Posterior vena cava (tissue), 2 donors: ENCODE measurements at regions of chr7 and their contacts with region 1.

Region 1: DNA sequence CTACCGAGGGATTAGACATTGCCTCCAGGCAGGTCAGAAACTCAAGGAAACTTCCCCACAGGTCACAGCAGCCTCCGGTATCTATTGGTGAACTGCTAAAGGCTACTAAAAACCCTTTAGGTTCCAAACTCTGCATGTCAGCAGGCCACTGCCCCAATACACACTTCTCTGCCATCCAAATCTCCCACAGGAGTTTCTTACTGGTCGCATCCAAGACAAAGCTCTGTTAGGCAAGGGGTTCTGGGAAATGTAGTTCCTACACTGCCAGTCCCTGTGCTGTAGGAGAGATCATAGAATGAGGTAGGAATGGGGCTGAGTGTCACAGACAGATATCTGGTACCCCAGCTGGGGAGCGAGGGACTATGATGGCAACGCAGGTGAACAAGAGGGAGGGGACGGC is 757.0 kb upstream of the C7orf33 start:
- DNase-seq: no peak

Region 2: GRCh38 chr7:147308539-147308938 is 525.0 kb before region 1 on chr7:
- intact Hi-C with region 1: loop called in 1 of 2 experiments (anchors 5 kb)
- DNase-seq: no peak

Region 3: GRCh38 chr7:147803606-147804005 is 30.0 kb before region 1 on chr7:
- intact Hi-C with region 1: no loop called
- DNase-seq: no peak